Right ventricle myocardium superior (tissue), 1 donor: ENCODE measurements at regions of chr12 and their contacts with region 1.

Region 1: GRCh38 chr12:1804545-1805332 is 15.6 kb upstream of the LRTM2 start:
- DNase-seq: peak; percentile 93
- ATAC-seq: peak; percentile 82

Region 2: DNA sequence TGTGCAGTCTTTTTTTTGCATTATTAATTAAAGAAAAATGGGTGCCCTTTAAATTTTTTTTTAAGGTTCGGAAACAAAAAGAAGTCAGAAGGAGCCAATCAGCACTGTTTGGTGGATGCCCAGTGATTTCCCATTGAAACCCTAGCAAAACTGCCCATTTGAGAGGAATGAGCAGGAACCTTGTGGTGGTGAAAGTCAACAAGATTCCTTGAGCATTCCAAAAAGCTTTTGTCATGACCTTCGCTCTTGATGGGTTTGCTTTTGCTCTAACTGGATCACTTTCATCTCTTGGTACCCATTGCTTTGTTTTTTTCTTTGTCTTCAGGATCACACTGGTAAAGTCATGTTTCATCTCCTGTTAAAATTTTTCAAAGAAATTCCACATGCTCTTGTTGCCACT is 59.8 kb before region 1 on chr12:
- intact Hi-C with region 1: no loop called
- DNase-seq: no peak
- ATAC-seq: no peak

Region 3: DNA sequence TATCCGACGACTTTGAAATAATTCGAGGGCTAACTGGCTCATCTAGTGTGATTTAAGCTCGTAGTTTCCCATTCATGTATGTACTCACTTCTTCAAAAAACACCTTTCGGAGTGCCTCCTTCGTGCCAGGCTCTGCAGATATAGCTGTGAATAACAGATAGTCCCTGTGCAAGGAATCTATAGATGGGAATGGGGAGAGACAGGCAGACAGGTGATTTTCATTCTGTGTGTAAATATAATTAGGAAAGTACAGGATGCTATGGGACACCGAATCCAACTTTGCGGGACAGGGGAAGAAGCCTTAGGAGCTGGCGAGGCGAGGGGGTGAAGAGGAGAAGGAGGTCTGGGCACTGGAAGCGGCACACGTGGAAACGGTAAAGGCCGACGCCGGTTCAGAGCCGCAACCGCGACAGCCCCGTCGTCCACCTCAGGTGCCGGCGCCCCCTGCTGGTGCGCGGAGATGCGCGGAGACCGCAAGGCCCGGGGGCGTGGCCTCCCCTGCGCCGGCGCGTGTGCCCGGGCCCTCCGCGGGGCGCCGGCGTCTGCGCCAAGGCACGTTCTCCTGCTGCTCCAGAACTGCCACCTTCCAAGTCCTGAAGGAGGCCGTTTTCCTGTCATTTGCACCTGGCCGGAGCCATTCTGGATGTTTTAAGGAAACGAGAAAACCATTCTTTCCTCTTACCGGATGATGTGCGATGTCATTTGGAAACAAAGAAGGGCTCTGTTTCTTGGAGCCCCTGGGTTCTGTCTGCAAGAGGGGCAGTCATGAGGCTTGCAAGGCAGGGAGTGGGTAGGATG is 230.1 kb after region 1 on chr12:
- intact Hi-C with region 1: loop called (anchors 10 kb)
- DNase-seq: peak; percentile 93
- ATAC-seq: peak; percentile 80

Region 4: DNA sequence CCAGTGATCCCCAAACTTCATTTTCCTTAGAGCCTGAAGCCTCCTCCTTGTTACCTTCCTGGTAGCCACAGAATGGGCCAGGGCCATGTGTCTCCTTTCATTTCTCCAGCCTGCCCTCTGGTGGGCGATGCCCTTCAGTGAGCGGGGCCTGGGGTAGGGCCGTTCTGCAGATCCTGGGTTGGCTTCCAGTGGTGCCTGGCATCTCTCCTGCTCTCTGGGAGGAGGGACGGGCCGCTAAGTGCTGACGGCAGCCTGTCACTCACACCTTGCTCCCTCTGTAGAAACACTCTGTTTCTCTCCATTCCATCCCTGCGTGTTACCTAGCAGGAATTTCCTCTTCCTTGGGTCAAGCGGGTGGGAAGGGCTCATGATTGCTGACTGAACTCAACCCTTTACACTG is 480.1 kb after region 1 on chr12:
- intact Hi-C with region 1: loop called (anchors 10 kb)
- DNase-seq: peak; percentile 92
- ATAC-seq: peak; percentile 84